ENCODE measurements at regions of chr19 and their contacts with region 1.

Region 1: GRCh38 chr19:55605207-55605636 is 225 bp upstream of the ZNF865 start:
- DNase-seq: peak; percentile 98
- ATAC-seq: peak; percentile 58
- H3K4me3 Mint-ChIP-seq: peak overlapping the region; percentile 83
- H3K27ac Mint-ChIP-seq: peak overlapping the region; percentile 99
- H3K4me1 Mint-ChIP-seq: peaks cover 27% of the 10 kb centered on the region
- H3K27me3 Mint-ChIP-seq: no peaks in the 10 kb centered on the region
- CTCF ChIP-seq: no peak

Region 2: DNA sequence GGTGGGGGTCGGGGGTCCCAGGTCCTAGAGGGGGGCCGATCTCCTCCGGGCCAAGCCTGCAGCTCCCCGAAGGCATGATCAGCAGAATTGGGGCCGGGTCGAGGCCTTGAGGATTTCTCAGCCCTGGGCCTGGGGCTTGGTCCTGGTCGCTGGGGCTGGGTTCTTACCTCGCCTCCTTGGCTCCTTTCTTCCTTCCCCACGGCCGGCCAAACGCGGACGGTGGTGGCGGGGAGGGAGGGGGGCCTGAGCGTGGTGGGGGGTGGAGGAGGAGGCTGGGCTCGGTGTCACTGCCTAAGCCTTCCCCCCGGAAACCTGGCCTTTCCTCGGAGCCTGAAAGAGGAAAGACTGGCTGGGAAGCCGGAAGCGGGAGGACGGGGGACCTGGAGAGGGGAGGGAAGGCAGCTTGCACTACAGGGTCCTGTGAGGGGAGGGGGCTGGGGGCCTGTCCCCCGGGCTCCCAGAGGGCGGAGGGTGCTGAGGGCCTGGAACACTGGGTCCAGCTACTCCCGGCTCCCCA is 24.5 kb before region 1 on chr19 and contains the start of gene ZNF579:
- CTCF ChIA-PET with region 1: interaction called, 20 read pairs
- POLR2A ChIA-PET with region 1: no interaction called
- DNase-seq: peak; percentile 89
- ATAC-seq: peak; percentile 72
- H3K4me3 Mint-ChIP-seq: peak within 1 kb of the TSS; percentile 86
- H3K27ac Mint-ChIP-seq: peak within 1 kb of the TSS; percentile 90
- H3K4me1 Mint-ChIP-seq: peaks cover 10% of the 10 kb centered on the region
- H3K27me3 Mint-ChIP-seq: peaks cover 17% of the 10 kb centered on the region
- CTCF ChIP-seq: no peak
- total RNA-seq, gene ZNF579: 29.7 to 30.4 TPM (median 30.0 TPM) in 3 replicates

Region 3: DNA sequence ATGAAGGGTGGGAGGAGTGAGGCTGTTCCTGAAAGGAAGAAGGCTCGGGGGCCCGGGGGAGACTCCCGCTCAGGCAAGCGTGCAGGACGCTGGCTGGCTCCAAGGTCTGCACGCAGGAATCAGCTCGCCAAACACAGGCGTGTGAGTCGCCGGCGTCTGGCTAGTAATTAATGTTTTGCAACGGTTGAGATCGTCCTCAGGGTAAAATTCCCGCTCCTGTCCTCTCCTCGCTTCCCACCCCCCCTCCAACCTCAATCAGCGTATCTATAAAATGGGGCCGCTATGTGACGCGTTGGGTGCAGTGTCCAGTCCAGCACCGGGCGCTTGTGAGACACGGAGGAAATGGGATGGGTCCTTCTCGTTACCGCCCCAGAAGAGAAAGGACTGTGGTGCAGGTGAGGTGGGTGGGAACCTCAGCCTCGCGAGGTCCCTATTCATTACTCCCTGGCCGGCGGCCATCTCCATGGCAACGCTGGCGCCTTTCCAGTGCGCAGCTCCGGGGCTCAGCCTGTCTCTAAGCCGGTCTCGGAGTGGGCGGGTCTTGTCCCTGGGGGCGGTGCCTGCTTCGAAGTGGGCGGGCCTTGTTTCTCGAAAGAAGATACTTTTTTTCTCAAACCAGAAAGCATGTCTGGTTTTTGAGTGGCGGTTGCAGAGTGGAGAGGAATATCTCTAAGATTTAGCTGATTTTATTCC is 18.1 kb before region 1 on chr19:
- CTCF ChIA-PET with region 1: interaction called, 13 read pairs
- POLR2A ChIA-PET with region 1: interaction called, 9 read pairs
- DNase-seq: peak; percentile 98
- ATAC-seq: peak; percentile 90
- H3K4me3 Mint-ChIP-seq: peak overlapping the region; percentile 75
- H3K27ac Mint-ChIP-seq: no peak overlapping the region
- H3K4me1 Mint-ChIP-seq: peaks cover 36% of the 10 kb centered on the region
- H3K27me3 Mint-ChIP-seq: peaks cover 33% of the 10 kb centered on the region
- CTCF ChIP-seq: no peak

Region 4: DNA sequence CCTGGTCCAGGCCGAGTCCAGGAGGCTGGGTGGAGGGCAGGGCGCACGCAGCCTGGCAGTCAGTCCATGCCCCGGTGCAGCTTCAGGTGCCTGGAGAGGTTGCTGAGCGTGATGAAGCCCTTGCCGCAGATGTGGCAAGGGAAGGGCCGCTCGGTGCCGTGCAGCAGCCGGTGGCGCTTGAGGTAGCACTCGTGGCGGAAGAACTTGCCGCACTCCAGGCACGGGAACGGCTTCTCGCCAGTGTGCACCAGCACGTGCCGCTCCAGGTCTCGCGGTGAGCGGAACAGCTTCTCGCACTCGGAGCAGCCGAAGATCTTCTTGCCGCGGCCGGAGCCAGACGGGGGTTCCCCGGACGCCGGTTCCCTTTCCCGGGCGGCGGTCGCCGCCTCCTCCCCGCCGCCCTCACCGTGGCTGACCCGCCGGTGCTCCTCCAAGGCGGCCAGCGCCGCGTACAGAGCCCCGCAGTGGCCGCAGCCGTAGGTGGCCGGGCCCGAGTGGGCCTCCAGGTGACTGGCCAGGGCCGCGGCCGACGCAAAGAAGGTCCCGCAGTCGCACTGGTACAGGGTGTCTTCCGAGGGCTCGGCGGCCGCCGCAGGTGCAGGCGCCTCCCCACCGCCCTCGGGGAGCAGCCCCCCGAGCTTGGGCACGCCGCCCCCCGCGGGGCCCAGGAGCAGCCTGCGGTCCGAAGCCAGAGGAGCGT is 12.7 kb before region 1 on chr19:
- CTCF ChIA-PET with region 1: interaction called, 13 read pairs
- POLR2A ChIA-PET with region 1: interaction called, 9 read pairs
- DNase-seq: no peak
- ATAC-seq: no peak
- H3K4me3 Mint-ChIP-seq: no peak overlapping the region
- H3K27ac Mint-ChIP-seq: no peak overlapping the region
- H3K4me1 Mint-ChIP-seq: peaks cover 20% of the 10 kb centered on the region
- H3K27me3 Mint-ChIP-seq: peaks cover 9% of the 10 kb centered on the region
- CTCF ChIP-seq: no peak

Region 5: GRCh38 chr19:55624109-55625003 is 19.1 kb after region 1 on chr19 and contains the start of gene ZNF784:
- CTCF ChIA-PET with region 1: interaction called, 34 read pairs
- POLR2A ChIA-PET with region 1: interaction called, 10 read pairs
- DNase-seq: peak; percentile 92
- ATAC-seq: peak; percentile 87
- H3K4me3 Mint-ChIP-seq: peak within 1 kb of the TSS; percentile 76
- H3K27ac Mint-ChIP-seq: peak within 1 kb of the TSS; percentile 90
- H3K4me1 Mint-ChIP-seq: peaks cover 15% of the 10 kb centered on the region
- H3K27me3 Mint-ChIP-seq: peaks cover 18% of the 10 kb centered on the region
- CTCF ChIP-seq: no peak
- total RNA-seq, gene ZNF784: 9.9 to 12.1 TPM (median 11.4 TPM) in 3 replicates

Region 6: GRCh38 chr19:55632463-55632834 is 27.2 kb after region 1 on chr19:
- CTCF ChIA-PET with region 1: interaction called, 55 read pairs
- POLR2A ChIA-PET with region 1: interaction called, 8 read pairs
- DNase-seq: peak; percentile 92
- ATAC-seq: peak; percentile 61
- H3K4me3 Mint-ChIP-seq: peak overlapping the region; percentile 20; the same call in 1 of the 2 replicates
- H3K27ac Mint-ChIP-seq: peak overlapping the region; percentile 80
- H3K4me1 Mint-ChIP-seq: peaks cover 29% of the 10 kb centered on the region
- H3K27me3 Mint-ChIP-seq: peaks cover 9% of the 10 kb centered on the region; the same call in 1 of the 2 replicates
- CTCF ChIP-seq: peak; percentile 87

Region 7: DNA sequence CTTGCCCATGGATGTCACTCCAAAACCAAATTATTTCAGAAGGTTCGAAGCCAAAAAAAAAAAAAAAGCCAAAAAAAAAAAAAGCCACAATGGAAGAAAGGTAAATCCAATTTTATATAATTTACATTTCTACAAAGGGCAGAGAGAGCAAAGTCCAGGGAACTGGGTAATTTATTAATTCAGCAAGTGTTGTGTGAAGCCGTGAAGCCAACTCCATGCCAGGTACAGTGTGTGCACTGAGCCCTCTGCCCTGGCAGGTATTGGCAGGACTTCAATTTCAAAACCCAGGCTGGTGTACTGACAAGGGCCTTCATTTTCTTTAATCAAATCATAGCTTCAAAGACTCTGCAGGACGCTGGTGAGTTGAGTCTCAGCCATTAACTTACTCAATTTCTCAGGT is 148.2 kb after region 1 on chr19:
- CTCF ChIA-PET with region 1: no interaction called
- POLR2A ChIA-PET with region 1: no interaction called
- DNase-seq: no peak
- ATAC-seq: no peak
- H3K4me3 Mint-ChIP-seq: no peak overlapping the region
- H3K27ac Mint-ChIP-seq: no peak overlapping the region
- H3K4me1 Mint-ChIP-seq: no peaks in the 10 kb centered on the region
- H3K27me3 Mint-ChIP-seq: peaks cover 18% of the 10 kb centered on the region
- CTCF ChIP-seq: no peak

Region 8: DNA sequence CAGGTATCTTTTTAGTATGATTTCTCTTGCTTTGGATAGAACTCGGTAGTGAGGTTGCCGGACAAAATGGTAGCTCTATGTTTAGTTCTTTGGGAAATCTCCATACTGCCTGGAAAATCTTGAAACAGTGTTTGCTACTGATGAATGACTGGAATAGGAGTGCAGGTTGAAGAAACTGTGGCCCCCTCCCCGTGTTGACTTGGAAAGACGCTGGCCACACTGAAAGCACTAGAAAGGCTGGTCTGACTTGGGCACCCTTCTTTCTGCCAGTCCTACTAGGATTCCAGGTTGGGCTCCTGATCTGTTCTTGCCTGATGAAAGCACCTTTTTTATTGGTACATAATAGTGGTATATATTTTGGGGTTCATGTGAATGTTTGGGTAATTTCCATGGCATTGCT is 277.4 kb after region 1 on chr19:
- CTCF ChIA-PET with region 1: no interaction called
- POLR2A ChIA-PET with region 1: no interaction called
- DNase-seq: no peak
- ATAC-seq: no peak
- H3K4me3 Mint-ChIP-seq: no peak overlapping the region
- H3K27ac Mint-ChIP-seq: no peak overlapping the region
- H3K4me1 Mint-ChIP-seq: no peaks in the 10 kb centered on the region
- H3K27me3 Mint-ChIP-seq: peaks cover 7% of the 10 kb centered on the region
- CTCF ChIP-seq: no peak

Measured in WTC11 (cell line).